SK-N-SH (cell line): ENCODE measurements at regions of chr2 and their contacts with region 1.

Region 1: GRCh38 chr2:60707750-60708371 is 48.2 kb upstream of the PAPOLG start:
- DNase-seq: peak; percentile 52
- H3K4me3 ChIP-seq: no peak overlapping the region; a peak in 1 of 4 replicates
- H3K27ac ChIP-seq: no peak overlapping the region
- H3K4me1 ChIP-seq: no peaks in the 10 kb centered on the region
- H3K27me3 ChIP-seq: no peaks in the 10 kb centered on the region
- CTCF ChIP-seq: peak; percentile 86
- EP300 ChIP-seq: no peak
- RAD21 ChIP-seq: peak; percentile 78

Region 2: GRCh38 chr2:60260639-60261296 is 447.1 kb before region 1 on chr2:
- CTCF ChIA-PET with region 1: no interaction called
- POLR2A ChIA-PET with region 1: no interaction called
- DNase-seq: no peak
- H3K4me3 ChIP-seq: no peak overlapping the region
- H3K27ac ChIP-seq: no peak overlapping the region
- H3K4me1 ChIP-seq: no peaks in the 10 kb centered on the region
- H3K27me3 ChIP-seq: no peaks in the 10 kb centered on the region
- CTCF ChIP-seq: no peak
- EP300 ChIP-seq: no peak
- RAD21 ChIP-seq: no peak

Region 3: GRCh38 chr2:60693551-60693950 is 14.3 kb before region 1 on chr2:
- CTCF ChIA-PET with region 1: interaction called, 33 read pairs
- POLR2A ChIA-PET with region 1: no interaction called
- DNase-seq: no peak
- H3K4me3 ChIP-seq: no peak overlapping the region
- H3K27ac ChIP-seq: no peak overlapping the region
- H3K4me1 ChIP-seq: no peaks in the 10 kb centered on the region
- H3K27me3 ChIP-seq: no peaks in the 10 kb centered on the region
- CTCF ChIP-seq: no peak
- EP300 ChIP-seq: no peak
- RAD21 ChIP-seq: no peak

Region 4: GRCh38 chr2:60756191-60757041 is 48.6 kb after region 1 on chr2 and contains the start of gene PAPOLG:
- CTCF ChIA-PET with region 1: interaction called, 11 read pairs
- POLR2A ChIA-PET with region 1: no interaction called
- DNase-seq: peak; percentile 96
- H3K4me3 ChIP-seq: peak within 1 kb of the TSS; percentile 79
- H3K27ac ChIP-seq: peak within 1 kb of the TSS; percentile 79 to 88
- H3K4me1 ChIP-seq: peaks cover 0 to 5% of the 10 kb centered on the region in 2 experiments; a peak in 2 of 4 replicates
- H3K27me3 ChIP-seq: no peaks in the 10 kb centered on the region
- CTCF ChIP-seq: no peak
- EP300 ChIP-seq: no peak
- RAD21 ChIP-seq: no peak
- polyA plus RNA-seq, gene PAPOLG: 2.1 and 3.4 TPM in 2 replicates

Region 5: GRCh38 chr2:60992985-60993392 is 285.1 kb after region 1 on chr2:
- CTCF ChIA-PET with region 1: interaction called, 107 read pairs
- POLR2A ChIA-PET with region 1: no interaction called
- DNase-seq: no peak
- H3K4me3 ChIP-seq: no peak overlapping the region
- H3K27ac ChIP-seq: no peak overlapping the region
- H3K4me1 ChIP-seq: no peaks in the 10 kb centered on the region
- H3K27me3 ChIP-seq: no peaks in the 10 kb centered on the region
- CTCF ChIP-seq: no peak
- EP300 ChIP-seq: no peak
- RAD21 ChIP-seq: no peak

Region 6: DNA sequence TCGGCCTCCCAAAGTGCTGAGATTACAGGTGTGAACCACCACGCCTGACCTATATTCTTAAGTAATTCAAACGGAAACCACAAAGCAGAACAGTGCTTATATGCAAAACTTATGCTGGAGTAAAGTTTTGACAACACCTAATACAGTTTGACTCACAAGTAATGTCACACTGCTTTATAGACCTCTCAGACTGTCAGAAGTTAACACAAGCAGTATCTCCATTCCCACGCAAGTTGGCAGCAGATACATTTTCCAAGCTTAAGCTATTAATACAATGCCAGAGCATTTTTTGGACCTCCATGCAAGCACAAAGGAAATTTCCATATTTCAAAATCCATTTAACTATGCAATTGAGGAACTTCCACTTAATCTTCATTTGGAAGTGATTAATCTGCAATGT is 336.8 kb after region 1 on chr2:
- CTCF ChIA-PET with region 1: no interaction called
- POLR2A ChIA-PET with region 1: no interaction called
- DNase-seq: no peak
- H3K4me3 ChIP-seq: no peak overlapping the region
- H3K27ac ChIP-seq: no peak overlapping the region
- H3K4me1 ChIP-seq: no peaks in the 10 kb centered on the region
- H3K27me3 ChIP-seq: no peaks in the 10 kb centered on the region
- CTCF ChIP-seq: no peak
- EP300 ChIP-seq: no peak
- RAD21 ChIP-seq: no peak